Gastrocnemius medialis (tissue), 4 donors: ENCODE measurements at regions of chr6 and their contacts with region 1.

Region 1: GRCh38 chr6:34602318-34603111 is 46.4 kb upstream of the SPDEF start:
- DNase-seq: peak; percentile 63 to 76
- ATAC-seq: peak; percentile 72 to 73
- H3K4me3 ChIP-seq: no peak overlapping the region
- H3K27ac ChIP-seq: peak overlapping the region; percentile 65 to 92 (median 80)
- H3K4me1 ChIP-seq: peaks cover 68 to 71% of the 10 kb centered on the region in 2 donors
- H3K27me3 ChIP-seq: no peaks in the 10 kb centered on the region
- CTCF ChIP-seq: no peak
- POLR2A ChIP-seq: no peak

Region 2: DNA sequence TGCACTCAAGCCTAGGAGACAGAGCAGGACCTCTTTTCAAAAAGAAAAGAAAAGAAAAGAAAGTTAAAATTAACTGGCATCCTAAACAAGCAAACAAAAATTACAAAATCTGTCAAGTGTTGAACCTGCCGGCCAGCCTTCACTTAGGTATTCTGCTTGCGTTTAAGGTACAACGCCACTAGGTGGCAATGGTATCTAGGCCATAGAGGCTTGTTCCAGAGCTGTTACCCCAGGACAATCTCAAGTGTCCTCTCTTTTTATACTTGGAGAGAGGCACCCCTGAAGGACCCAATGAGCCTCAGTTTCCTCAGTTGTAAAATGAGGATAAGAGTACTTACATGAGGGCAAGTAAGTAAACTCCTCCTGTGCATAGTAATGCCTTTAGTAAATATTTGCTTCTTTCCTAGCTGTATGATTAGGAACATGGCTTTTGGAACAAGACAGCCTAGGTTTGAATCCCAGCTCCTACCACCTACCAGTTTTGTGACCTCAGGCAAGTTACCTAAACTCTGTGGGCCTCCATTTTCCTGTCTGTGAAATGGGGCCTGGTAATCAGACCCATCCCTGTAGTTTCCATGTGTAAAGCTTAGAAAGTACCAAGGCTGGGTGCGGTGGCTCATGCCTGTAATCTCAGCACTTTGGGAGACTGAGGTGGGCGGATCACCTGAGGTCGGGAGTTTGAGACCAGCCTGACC is 142.5 kb before region 1 on chr6:
- in situ Hi-C with region 1: loop called in 2 of 4 experiments (anchors 10 to 25 kb)
- intact Hi-C with region 1: no loop called
- DNase-seq: peak; percentile 24 to 49
- ATAC-seq: peak; percentile 92 to 95
- H3K4me3 ChIP-seq: no peak overlapping the region
- H3K27ac ChIP-seq: no peak overlapping the region
- H3K4me1 ChIP-seq: no peaks in the 10 kb centered on the region
- H3K27me3 ChIP-seq: peaks cover 0 to 5% (median 2%) of the 10 kb centered on the region in 3 donors
- CTCF ChIP-seq: peak; percentile 56 to 78 (median 64)
- POLR2A ChIP-seq: no peak